ENCODE measurements at regions of chr17 and their contacts with region 1.

Region 1: DNA sequence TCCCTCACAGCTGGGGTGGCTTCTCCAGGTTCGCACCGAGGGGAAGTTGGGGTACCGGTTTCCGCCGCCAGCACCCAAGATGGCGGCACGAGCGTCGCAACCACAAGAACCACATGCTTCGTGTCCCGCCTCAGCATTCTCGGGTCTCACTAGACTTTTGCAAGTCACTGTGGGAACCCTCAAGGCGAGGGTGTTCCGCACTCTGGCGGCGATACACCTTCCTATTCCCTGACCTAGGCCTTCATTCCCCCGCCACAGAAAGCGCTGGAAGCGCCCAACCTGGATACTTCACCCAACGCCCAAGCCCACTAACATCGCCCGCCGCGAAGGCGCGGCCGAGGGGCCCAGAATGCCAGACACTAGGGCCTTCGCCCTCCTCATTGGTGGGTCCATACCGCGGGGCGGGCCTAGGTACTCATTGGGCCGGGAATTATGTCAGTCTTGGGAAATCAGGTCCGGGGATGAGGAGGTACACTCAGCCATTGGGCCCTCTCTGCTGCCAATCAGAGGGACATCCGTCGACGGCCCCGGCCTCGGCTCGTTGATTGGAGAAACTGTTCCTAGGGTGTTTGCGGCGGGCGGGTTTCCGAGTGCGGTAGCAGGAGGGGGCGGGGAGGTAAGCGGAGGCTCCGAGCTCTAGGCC is at the start of gene NFE2L1:
- H3K4me3 ChIP-seq: peak within 1 kb of the TSS; percentile 83
- H3K27ac ChIP-seq: peak within 1 kb of the TSS; percentile 97
- H3K4me1 ChIP-seq: peaks cover 36% of the 10 kb centered on the region
- CTCF ChIP-seq: peak; percentile 30; the same call in 1 of the 2 replicates

Region 2: DNA sequence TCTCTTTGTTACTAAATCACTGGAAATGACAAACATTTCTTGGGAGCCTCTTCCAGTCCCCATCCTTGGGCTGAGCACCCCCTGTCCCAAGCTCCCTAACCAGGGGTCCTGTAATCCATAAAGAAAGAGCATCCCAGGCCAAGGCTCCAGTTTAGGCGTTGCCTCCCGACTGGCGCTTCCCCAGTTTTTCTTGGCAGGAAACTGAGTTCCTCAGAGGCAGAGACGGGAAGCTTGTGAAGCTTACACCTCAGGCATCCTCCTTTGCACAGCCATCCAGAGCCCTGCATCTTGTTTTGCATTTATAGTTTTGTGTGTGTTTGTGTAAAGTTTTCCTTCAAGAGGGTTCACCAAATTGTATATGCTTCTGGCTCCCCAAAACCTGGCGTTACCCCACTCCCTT is 17.3 kb before region 1 on chr17:
- CTCF ChIA-PET with region 1: interaction called, 30 read pairs
- POLR2A ChIA-PET with region 1: interaction called, 26 read pairs
- H3K4me3 ChIP-seq: no peak overlapping the region
- H3K27ac ChIP-seq: no peak overlapping the region
- H3K4me1 ChIP-seq: peaks cover 9% of the 10 kb centered on the region
- CTCF ChIP-seq: no peak

Region 3: GRCh38 chr17:48060249-48060648 is 12.4 kb after region 1 on chr17:
- CTCF ChIA-PET with region 1: interaction called, 9 read pairs
- POLR2A ChIA-PET with region 1: interaction called, 51 read pairs
- H3K4me3 ChIP-seq: no peak overlapping the region
- H3K27ac ChIP-seq: no peak overlapping the region
- H3K4me1 ChIP-seq: peaks cover 3% of the 10 kb centered on the region; the same call in 1 of the 2 replicates
- CTCF ChIP-seq: no peak

Region 4: DNA sequence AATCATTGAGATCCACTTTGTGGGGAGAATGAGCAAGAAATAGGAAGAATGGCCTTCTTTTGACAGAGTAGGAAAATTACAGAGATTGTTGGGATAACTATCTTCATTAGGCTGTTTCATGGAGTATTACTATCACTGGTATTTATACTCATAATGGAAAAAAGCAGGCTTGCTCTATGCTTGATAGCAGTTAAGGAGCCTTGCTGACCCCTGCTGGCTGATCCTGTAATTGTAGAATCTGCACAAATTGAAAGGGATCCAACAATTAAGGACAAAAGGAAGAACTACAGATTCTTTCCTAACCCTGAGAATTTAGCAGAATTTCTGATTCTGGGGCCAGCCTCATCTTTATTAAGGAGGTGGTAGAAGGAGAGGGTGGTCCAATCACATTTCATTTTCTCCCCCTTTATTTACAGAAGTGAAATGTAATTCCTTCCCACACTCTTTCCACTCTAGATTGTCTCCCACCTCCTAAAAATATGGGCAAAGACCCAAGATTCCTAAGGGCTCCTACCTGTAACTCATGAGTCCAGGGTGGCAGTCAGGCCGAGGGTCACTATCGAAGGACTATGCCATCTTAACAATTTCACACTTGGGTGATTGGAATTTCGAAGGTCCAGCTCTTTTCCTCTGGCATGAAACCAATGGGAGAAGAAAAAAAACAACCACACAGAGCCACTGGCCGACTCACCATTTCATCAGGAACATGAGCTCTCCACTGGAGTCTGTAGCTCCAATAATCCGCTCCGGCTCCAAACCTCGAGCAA is 26.6 kb after region 1 on chr17:
- CTCF ChIA-PET with region 1: interaction called, 18 read pairs
- POLR2A ChIA-PET with region 1: interaction called, 8 read pairs
- H3K4me3 ChIP-seq: no peak overlapping the region
- H3K27ac ChIP-seq: peak overlapping the region; percentile 44; the same call in 1 of the 2 replicates
- H3K4me1 ChIP-seq: no peaks in the 10 kb centered on the region
- CTCF ChIP-seq: peak; percentile 23; the same call in 1 of the 2 replicates

Region 5: DNA sequence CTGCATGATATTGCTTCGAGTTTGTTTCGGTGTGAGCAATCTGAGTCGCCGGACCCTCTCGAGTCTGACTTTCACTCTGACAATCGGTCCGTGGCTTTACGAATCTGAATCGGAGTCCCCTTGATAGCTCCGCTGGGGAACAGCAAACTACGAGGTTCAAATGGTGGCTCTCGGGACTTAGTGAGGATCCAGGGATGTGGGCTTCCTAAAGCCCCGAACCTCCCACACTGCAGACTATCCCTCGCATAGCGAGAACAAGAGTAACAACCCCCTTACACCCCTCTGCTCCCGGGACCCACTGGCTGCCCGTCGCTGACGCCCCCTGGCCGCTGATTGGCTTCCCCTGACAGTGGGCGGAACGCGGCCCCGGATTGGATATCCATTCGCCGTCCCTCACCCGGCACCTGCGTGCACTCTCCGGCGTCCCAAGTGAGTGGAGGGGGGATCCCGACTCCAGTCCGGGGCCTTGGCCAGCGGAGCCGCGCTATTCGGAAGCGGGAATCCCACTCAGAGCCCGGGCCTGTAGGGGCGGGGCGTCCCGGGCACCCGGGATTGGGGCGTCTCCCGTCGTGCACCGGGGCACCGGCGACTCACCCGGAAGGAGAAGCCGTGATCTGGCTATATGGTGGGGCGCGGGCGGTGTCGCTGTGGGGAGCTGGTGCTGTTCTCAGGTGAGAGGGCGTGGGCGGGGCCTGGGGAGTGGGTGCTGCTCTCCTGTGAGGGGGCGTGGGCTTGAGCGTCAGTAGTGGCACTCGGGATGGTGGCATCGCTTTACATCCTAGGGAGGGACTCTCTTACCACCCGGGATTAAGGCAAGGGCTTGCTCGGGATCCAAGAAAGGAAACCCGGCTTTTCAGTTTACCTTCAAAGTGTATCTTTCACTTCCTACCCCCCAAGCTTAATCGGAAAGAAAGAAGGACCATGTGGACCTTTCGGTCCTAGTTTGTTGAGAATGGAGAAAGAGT is 59.6 kb after region 1 on chr17 and contains the start of gene SNX11:
- CTCF ChIA-PET with region 1: interaction called, 4 read pairs
- POLR2A ChIA-PET with region 1: interaction called, 20 read pairs
- H3K4me3 ChIP-seq: peak within 1 kb of the TSS; percentile 81
- H3K27ac ChIP-seq: peak within 1 kb of the TSS; percentile 87
- H3K4me1 ChIP-seq: peaks cover 8% of the 10 kb centered on the region
- CTCF ChIP-seq: peak; percentile 76; the same call in 1 of the 2 replicates

Measured in HEK293 (cell line).